A673 (cell line): ENCODE measurements at regions of chr18 and their contacts with region 1.

Region 1: GRCh38 chr18:46481048-46481846 is 175.8 kb downstream of the LOXHD1 start:
- DNase-seq: peak; percentile 70
- H3K4me3 ChIP-seq: no peak overlapping the region
- H3K27ac ChIP-seq: no peak overlapping the region
- H3K4me1 ChIP-seq: peaks cover 15% of the 10 kb centered on the region
- H3K27me3 ChIP-seq: no peaks in the 10 kb centered on the region
- CTCF ChIP-seq: peak; percentile 80

Region 2: DNA sequence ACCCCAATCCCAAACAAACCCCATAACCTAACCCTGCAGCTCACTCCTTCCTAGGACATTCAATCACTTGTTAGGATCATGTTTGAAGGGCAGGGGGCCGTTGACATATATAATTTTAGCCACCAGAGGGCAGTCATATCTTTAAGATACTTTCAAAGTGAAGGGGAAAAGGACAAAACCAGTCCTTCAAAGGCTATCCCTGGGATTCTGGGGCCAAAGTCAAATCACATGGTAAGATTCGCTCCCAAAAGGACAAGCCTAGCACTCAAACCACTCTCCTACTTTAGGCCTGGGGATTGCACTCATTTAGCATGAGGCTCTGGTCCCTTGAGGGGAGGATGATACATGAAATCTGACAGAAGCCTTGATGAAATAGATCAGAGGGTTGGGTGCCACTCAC is 332.4 kb before region 1 on chr18:
- CTCF ChIA-PET with region 1: no interaction called
- POLR2A ChIA-PET with region 1: no interaction called
- intact Hi-C with region 1: loop called (anchors 5 kb)
- DNase-seq: peak; percentile 73
- H3K4me3 ChIP-seq: no peak overlapping the region
- H3K27ac ChIP-seq: no peak overlapping the region
- H3K4me1 ChIP-seq: no peaks in the 10 kb centered on the region
- H3K27me3 ChIP-seq: no peaks in the 10 kb centered on the region
- CTCF ChIP-seq: peak; percentile 74

Region 3: DNA sequence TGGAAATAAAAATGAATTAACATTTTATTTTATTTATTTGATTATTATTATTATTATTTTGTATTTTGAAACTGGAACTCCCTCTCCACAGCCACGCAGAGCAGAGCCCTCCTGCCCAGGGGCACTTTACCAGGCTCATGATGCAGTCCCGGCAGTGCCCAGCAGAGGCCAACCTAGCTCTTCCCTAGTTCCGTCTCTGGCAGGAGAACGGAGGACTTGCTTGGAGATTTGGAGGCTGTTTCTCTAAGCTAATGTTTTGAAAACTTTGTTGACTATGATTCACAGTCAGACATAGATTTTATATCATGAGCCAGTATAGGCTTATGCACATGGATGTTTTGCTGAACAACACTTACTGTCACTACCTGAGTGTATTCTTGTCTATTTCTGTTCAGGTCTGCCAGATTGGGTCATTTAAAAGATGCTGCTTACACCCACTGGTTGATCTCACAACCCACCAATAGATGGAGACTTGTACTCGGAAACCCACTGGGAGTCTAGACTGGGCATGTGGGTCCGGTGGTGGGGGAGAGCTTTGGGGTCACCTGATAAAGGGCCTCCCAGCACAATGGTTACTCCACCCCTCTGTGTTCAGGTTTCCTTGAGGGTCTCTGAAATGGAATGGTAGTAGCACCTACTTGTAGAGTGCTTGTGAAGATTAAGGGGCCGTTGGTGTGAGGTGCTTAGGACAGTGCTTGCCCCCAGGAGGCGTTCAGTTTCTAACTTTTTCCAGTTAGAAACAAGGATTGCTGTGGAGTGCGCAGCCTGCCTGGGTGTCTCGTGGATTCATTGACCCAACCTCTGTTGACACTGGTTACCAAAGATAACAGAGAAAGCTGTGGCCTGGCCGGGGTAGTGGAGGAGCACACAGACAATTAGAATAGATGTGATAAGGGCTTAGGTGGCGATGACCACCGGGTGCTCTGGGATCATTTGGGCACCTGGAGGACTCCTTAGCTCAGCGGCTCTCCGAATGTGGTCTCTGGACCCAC is 199.8 kb before region 1 on chr18:
- CTCF ChIA-PET with region 1: interaction called, 13 read pairs
- POLR2A ChIA-PET with region 1: no interaction called
- intact Hi-C with region 1: loop called (anchors 1 kb)
- DNase-seq: peak; percentile 83
- H3K4me3 ChIP-seq: no peak overlapping the region
- H3K27ac ChIP-seq: no peak overlapping the region
- H3K4me1 ChIP-seq: peaks cover 28% of the 10 kb centered on the region
- H3K27me3 ChIP-seq: no peaks in the 10 kb centered on the region
- CTCF ChIP-seq: peak; percentile 92

Region 4: GRCh38 chr18:46619559-46619958 is 138.3 kb after region 1 on chr18:
- CTCF ChIA-PET with region 1: no interaction called
- POLR2A ChIA-PET with region 1: no interaction called
- intact Hi-C with region 1: no loop called
- DNase-seq: no peak
- H3K4me3 ChIP-seq: no peak overlapping the region
- H3K27ac ChIP-seq: no peak overlapping the region
- H3K4me1 ChIP-seq: peaks cover 11% of the 10 kb centered on the region
- H3K27me3 ChIP-seq: no peaks in the 10 kb centered on the region
- CTCF ChIP-seq: no peak

Region 5: DNA sequence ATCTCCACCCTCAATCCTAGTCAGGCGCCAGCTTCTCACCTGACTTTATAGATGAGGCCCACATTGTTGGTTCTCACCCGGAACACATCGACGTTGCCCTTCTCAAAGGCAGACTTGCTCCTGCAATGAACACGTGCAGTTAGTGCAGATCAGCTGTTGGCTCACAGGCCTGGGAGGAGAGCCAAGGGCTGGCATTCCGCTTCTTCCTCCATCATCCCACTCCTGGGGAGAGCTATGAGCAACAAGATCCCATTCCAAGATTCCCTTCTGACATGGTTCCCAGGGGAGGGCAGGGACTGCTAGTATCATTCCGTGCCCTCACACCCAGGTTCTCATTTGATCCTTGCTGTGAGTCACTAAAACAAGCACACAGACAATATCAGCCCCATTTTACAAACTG is 160.7 kb after region 1 on chr18:
- CTCF ChIA-PET with region 1: no interaction called
- POLR2A ChIA-PET with region 1: no interaction called
- intact Hi-C with region 1: loop called (anchors 10 kb)
- DNase-seq: no peak
- H3K4me3 ChIP-seq: no peak overlapping the region
- H3K27ac ChIP-seq: no peak overlapping the region
- H3K4me1 ChIP-seq: no peaks in the 10 kb centered on the region
- H3K27me3 ChIP-seq: no peaks in the 10 kb centered on the region
- CTCF ChIP-seq: no peak